Cardiac septum (tissue), 1 donor: ENCODE measurements at regions of chr12 and their contacts with region 1.

Region 1: GRCh38 chr12:56616925-56617324 is 13.2 kb downstream of the BAZ2A start:
- DNase-seq: no peak

Region 2: GRCh38 chr12:56321027-56321426 is 295.9 kb before region 1 on chr12:
- intact Hi-C with region 1: loop called (anchors 10 kb)
- DNase-seq: no peak